Transverse colon (tissue), 4 donors: ENCODE measurements at regions of chr2 and their contacts with region 1.

Region 1: DNA sequence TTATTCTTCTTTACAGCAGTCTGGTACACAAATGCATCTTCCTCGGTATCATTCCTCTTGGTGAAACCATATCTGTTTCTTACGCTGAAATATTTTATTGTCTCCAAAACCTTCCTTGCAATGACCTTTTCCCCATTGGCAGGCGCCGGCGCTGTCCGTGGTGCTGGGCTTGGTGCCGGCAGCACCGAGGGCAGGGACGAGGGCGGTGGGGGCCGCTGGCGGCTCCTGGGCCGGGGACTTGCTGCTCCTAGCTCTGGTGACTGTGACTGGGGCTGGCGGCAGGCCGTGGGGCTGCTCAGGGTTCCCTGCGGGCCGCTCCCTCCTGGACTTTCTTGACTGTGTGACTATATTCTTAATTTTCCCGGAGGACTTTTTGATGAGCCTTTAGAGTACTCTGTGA is 72.5 kb downstream of the GPR39 start:
- DNase-seq: no peak
- H3K4me3 ChIP-seq: no peak overlapping the region
- H3K27ac ChIP-seq: no peak overlapping the region
- H3K4me1 ChIP-seq: no peaks in the 10 kb centered on the region
- H3K27me3 ChIP-seq: peaks cover 4% of the 10 kb centered on the region
- CTCF ChIP-seq: no peak
- EP300 ChIP-seq: no peak
- POLR2A ChIP-seq: no peak

Region 2: GRCh38 chr2:132503701-132504100 is 14.6 kb after region 1 on chr2:
- in situ Hi-C with region 1: no loop called
- intact Hi-C with region 1: loop called (anchors 1 kb)
- DNase-seq: peak; percentile 15
- H3K4me3 ChIP-seq: no peak overlapping the region
- H3K27ac ChIP-seq: no peak overlapping the region
- H3K4me1 ChIP-seq: no peaks in the 10 kb centered on the region
- H3K27me3 ChIP-seq: no peaks in the 10 kb centered on the region
- CTCF ChIP-seq: no peak
- EP300 ChIP-seq: no peak
- POLR2A ChIP-seq: no peak

Region 3: DNA sequence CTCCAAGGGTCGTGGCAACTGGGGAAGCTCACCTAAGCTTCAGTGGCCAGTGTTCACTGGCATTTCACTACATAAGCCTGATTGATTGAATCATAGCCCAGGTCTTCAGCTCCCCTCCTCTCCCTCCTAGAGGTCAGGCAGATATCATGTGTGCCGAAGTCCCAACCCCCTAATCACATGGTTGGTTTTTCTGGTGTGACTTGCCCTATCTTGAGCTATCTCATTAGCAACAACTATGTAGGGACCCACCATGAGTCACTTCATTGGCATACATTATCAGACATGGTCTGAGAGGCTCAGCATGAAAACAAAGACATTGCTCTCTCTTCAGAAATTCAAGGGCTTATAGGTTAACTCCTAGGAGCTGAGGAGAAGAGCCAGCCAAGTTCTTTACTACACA is 104.0 kb after region 1 on chr2:
- in situ Hi-C with region 1: no loop called
- intact Hi-C with region 1: no loop called
- DNase-seq: no peak
- H3K4me3 ChIP-seq: no peak overlapping the region
- H3K27ac ChIP-seq: no peak overlapping the region
- H3K4me1 ChIP-seq: peaks cover 0 to 4% (median 0%) of the 10 kb centered on the region in 4 donors
- H3K27me3 ChIP-seq: no peaks in the 10 kb centered on the region
- CTCF ChIP-seq: no peak
- EP300 ChIP-seq: no peak
- POLR2A ChIP-seq: no peak

Region 4: GRCh38 chr2:132991471-132992045 is 502.4 kb after region 1 on chr2:
- in situ Hi-C with region 1: no loop called
- intact Hi-C with region 1: no loop called
- DNase-seq: no peak
- H3K4me3 ChIP-seq: no peak overlapping the region
- H3K27ac ChIP-seq: no peak overlapping the region
- H3K4me1 ChIP-seq: no peaks in the 10 kb centered on the region
- H3K27me3 ChIP-seq: no peaks in the 10 kb centered on the region
- CTCF ChIP-seq: no peak
- EP300 ChIP-seq: no peak
- POLR2A ChIP-seq: no peak